Mucosa of descending colon (tissue), 3 donors: ENCODE measurements at regions of chr14 and their contacts with region 1.

Region 1: GRCh38 chr14:68719634-68720384 is 73.1 kb downstream of the ZFP36L1 start:
- DNase-seq: no peak
- ATAC-seq: peak; percentile 30
- H3K4me3 ChIP-seq: no peak overlapping the region
- H3K4me1 ChIP-seq: peaks cover 10% of the 10 kb centered on the region
- CTCF ChIP-seq: no peak

Region 2: DNA sequence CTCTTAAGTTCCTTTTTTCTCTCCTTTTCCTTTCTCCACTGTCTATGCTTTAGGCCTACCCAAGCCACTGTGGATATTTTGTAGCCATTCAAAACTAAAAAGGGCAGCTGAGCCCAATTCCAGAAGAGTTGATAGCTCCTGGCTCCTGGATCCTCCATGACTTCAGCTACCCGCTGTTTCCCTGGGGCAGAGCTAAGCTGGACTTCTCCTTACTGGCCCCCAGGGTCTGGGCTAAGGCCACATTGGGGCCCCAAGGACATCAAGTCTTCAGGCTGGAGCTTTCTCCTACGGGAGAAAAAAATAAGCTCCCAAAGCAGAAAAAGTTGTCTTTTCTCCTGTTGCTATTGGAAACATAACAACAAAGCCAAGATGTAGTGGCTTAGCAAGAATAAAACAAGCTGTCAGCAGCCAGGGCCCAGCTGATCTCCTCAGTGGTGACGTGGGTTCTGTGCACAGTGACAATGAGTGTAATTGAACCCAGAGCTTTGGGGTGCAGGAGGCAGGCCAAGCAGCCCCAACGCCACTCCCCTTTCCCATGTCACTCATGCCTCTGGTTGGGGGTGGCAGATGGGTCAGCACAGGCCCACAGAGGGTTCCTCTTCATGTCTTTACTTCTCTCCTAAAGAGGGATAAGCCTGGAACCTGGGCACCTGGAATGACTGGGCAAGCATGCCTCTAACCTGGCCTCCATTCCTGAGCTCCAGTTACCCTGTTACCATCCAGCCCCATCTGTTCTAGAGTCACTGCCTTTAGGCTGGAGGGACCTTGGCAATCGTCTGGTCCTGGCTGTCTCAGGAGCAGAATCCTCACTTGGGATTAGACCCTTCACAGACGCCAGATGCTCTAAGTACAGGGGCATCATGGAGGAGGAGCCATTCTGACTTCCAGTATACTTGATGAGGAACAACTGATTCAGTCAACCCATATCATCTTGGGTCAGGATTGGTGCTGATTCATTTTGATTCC is 98.1 kb before region 1 on chr14:
- intact Hi-C with region 1: no loop called
- DNase-seq: no peak
- ATAC-seq: peak; percentile 57
- H3K4me3 ChIP-seq: no peak overlapping the region
- H3K4me1 ChIP-seq: no peaks in the 10 kb centered on the region
- CTCF ChIP-seq: no peak

Region 3: DNA sequence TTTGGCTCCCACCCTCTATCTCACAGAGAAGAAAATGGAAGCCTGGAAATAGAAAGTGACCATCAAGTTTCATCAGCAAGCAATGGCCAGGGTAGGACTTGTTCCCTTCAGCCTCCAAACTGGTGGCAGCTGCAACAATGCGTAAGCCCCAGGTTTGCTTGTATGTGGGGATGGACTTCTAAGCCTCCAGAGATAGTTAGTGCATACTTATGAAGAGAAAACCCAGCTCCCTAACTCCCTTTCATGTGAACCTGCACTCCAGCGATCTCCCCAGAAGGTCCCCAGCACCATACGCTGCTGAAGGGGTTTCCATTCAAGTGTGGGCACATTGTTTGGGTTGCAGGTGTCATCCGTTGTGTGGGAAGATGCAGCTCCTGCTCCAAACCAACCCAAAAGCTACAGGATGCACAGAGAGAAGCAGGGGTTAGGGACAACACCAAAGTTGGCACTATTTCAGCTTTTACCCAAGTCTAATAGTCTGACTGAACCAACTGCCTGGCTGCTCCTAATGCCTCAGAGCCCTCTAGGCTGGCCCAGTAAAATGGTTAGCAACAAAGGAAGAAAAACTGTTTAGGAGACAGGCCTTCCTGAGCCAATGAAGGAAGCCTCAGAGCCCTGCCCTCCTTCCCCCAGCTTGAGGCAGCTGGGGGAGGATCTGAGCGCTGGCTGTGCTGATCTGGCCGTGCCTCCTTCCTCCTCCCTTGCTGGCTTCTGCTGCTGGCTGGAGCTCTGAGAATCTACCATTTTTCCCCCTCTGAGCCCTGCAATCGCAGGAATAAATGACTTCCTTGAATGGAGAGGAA is 60.8 kb after region 1 on chr14:
- intact Hi-C with region 1: loop called in 1 of 2 experiments (anchors 5 kb)
- DNase-seq: peak; percentile 66 to 84 (median 77)
- ATAC-seq: peak; percentile 60
- H3K4me3 ChIP-seq: no peak overlapping the region
- H3K4me1 ChIP-seq: peaks cover 63% of the 10 kb centered on the region
- CTCF ChIP-seq: no peak